Ovary (tissue), 10 donors: ENCODE measurements at regions of chr12 and their contacts with region 1.

Region 1: DNA sequence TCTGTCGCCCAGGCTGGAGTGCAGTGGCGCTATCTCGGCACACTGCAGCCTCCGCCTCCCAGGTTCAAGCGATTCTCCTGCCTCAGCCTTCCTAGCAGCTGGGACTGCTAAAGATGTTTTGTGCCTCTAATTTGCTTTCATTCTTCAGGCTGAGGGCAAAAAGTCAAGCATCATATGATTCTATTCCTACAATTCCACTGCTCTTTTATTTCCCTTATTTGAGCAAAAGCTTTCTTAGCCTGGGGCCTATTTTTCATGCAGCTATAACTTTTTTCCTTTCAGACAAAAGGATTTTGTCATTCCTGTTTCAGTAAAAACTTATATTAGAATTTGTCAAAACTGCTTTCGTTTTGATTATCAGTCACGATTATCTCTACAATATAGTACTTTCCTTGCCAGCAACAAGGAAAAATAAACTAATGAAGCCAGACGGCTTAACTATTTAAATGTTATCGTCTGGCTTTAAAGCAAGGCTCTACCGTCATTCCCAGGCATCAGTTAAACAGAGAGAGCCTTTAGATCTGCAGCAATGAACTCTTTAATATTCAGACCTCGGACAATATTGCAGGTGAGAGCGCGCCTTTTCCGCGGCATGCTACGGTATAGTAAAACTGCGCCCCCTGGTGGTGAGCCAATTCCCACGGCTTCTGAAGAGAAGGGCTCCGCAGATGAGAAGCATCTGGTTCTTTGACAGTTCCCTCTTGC is 1.4 kb upstream of the SLC2A13 start:
- DNase-seq: peak; percentile 89 to 95 (median 93)
- H3K4me3 ChIP-seq: peak overlapping the region; percentile 26
- H3K27ac ChIP-seq: peak overlapping the region; percentile 7 to 84
- H3K4me1 ChIP-seq: peaks cover 9% of the 10 kb centered on the region
- H3K27me3 ChIP-seq: no peaks in the 10 kb centered on the region
- CTCF ChIP-seq: peak; percentile 70 to 78 (median 77)
- EP300 ChIP-seq: no peak
- POLR2A ChIP-seq: no peak

Region 2: DNA sequence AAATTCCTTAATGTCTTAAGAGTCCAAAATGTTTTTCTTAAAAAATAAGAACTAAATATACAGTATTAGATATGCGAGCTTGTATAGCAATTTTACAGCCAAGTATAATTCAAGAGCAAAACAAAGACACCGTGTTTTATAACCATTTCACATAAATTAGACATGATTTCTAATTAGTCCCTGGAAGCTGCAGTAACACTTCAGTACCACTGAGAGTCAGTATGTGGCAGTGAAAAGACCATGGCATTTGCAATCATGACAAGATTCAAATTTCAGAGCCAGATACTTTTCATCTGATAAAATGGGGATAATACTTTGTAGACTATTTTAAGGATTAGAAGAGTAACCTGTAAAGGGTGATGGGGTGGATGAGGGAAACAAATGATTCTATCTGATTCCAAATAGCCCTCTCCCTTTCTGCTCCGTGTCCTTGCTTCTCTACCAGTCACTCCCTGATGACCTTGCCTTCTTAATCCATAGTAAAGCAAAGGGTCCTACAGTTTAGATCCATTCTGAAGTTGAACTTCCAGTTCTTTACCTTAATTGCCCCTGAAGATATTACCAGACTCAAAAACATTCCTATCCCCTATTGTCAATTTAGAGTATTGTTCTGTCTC is 342.2 kb before region 1 on chr12:
- intact Hi-C with region 1: loop called in 3 of 4 experiments (anchors 5 to 10 kb)
- DNase-seq: no peak
- H3K4me3 ChIP-seq: no peak overlapping the region
- H3K27ac ChIP-seq: no peak overlapping the region
- H3K4me1 ChIP-seq: no peaks in the 10 kb centered on the region
- H3K27me3 ChIP-seq: no peaks in the 10 kb centered on the region
- CTCF ChIP-seq: peak; percentile 34 to 74 (median 46)
- EP300 ChIP-seq: no peak
- POLR2A ChIP-seq: no peak

Region 3: GRCh38 chr12:40010899-40011774 is 96.1 kb before region 1 on chr12:
- intact Hi-C with region 1: loop called in 1 of 4 experiments (anchors 5 kb)
- DNase-seq: peak in 2 of 5 donors; percentile 11 to 49
- H3K4me3 ChIP-seq: no peak overlapping the region
- H3K27ac ChIP-seq: no peak overlapping the region
- H3K4me1 ChIP-seq: no peaks in the 10 kb centered on the region
- H3K27me3 ChIP-seq: no peaks in the 10 kb centered on the region
- CTCF ChIP-seq: peak in 2 of 3 donors; percentile 22 to 23
- EP300 ChIP-seq: no peak
- POLR2A ChIP-seq: no peak

Region 4: DNA sequence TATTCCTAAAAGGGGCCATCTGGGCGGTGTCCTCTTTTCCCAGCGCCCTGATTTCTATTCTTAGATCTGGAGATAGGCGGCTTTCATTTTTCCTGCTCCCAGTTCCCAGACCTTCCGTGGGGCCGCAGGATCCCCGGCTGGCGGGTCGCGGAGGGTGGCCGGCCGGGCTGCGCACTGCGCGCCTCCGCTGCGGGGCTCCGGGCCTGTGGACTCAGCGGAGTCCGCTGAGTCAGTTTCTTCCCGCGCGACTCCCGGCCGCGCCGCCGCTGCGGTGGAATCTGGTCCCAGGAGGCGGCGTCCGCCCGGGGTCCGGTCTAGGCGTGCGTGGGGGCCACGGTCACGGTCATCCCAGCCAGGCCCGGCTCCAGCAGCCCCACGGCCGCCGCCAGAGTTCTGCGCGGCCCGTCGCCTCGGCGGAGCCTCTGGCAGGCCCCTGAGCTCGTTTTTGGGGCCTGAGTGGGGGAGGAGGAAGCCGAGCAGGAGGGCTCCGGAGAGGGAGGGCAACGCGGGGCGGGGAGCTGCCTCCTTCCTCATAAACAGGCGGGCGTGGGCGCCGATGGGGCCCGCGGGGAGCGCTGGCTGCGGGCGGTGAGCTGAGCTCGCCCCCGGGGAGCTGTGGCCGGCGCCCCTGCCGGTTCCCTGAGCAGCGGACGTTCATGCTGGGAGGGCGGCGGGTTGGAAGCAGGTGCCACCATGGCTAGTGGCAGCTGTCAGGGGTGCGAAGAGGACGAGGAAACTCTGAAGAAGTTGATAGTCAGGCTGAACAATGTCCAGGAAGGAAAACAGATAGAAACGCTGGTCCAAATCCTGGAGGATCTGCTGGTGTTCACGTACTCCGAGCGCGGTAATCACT is 117.4 kb after region 1 on chr12 and contains the start of gene LRRK2:
- intact Hi-C with region 1: loop called in 1 of 4 experiments (anchors 5 kb)
- DNase-seq: peak; percentile 83 to 90 (median 84)
- H3K4me3 ChIP-seq: peak within 1 kb of the TSS; percentile 87
- H3K27ac ChIP-seq: peak within 1 kb of the TSS; percentile 88
- H3K4me1 ChIP-seq: peaks cover 1% of the 10 kb centered on the region
- H3K27me3 ChIP-seq: no peaks in the 10 kb centered on the region
- CTCF ChIP-seq: no peak
- EP300 ChIP-seq: no peak
- POLR2A ChIP-seq: peak; percentile 47
- total RNA-seq, gene LRRK2: 9.9 to 19.7 (median 14.0) TPM